HCT116 (cell line): ENCODE measurements at regions of chr5 and their contacts with region 1.

Region 1: GRCh38 chr5:82641331-82642003 is 363.3 kb upstream of the RPS23 start:
- DNase-seq: peak; percentile 73
- ATAC-seq: peak; percentile 95
- H3K4me3 ChIP-seq: no peak overlapping the region
- H3K27ac ChIP-seq: no peak overlapping the region
- H3K4me1 ChIP-seq: peaks cover 10 to 27% of the 10 kb centered on the region in 2 experiments; a peak in 3 of 4 replicates
- H3K27me3 ChIP-seq: no peaks in the 10 kb centered on the region
- CTCF ChIP-seq: peak; percentile 62 to 72 (median 72)
- POLR2A ChIP-seq: no peak
- RAD21 ChIP-seq: peak; percentile 88

Region 2: DNA sequence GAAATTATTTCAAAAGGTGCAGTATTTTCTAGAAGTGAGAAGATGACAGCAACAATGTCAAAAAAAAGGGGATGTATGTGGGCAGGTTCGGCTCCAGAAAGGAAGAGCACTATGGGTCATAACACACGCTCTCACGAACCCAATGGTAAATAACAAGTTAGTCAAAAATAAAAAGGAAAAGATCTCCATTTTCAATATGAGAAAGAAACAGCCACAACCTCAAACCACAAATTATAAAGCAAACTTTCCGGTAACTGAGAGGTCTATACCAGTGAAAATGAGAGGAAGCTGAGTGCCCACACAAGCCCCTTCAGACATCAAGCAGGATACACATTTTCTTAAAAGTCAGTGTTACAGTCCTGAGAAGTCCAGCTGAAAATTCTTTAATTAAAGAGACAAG is 35.2 kb after region 1 on chr5:
- CTCF ChIA-PET with region 1: no interaction called
- POLR2A ChIA-PET with region 1: no interaction called
- RAD21 ChIA-PET with region 1: no interaction called
- intact Hi-C with region 1: no loop called
- DNase-seq: no peak
- ATAC-seq: no peak
- H3K4me3 ChIP-seq: no peak overlapping the region
- H3K27ac ChIP-seq: no peak overlapping the region
- H3K4me1 ChIP-seq: no peaks in the 10 kb centered on the region
- H3K27me3 ChIP-seq: no peaks in the 10 kb centered on the region
- CTCF ChIP-seq: no peak
- POLR2A ChIP-seq: no peak
- RAD21 ChIP-seq: no peak

Region 3: DNA sequence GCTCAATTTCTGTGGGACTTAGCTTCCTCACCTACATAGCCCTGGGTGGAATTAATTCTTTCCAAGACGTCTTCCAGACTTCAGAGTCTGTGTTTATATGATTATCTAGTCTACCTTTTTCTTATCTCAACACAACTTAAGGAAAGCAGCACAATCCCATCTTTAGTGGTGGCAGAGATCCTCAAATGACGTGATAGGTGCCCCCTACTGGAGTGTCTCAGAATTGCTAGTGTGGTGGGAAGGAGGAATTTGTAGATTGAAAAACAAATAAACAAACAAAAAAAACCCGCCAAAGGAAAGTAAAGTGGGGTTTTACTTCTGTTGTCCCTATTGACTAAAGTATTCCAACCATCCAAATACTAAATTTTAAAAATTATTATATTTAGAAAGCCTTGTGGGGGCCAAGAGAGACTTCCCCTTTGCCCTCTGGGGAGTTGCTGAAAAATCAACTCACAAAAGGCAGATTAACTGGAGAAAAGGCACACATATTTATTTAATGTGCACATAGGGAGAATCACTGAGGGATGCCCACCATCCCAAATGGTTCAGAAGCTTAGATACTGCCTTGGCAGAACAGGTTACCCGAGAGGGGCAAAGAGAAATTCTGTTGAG is 152.4 kb after region 1 on chr5:
- CTCF ChIA-PET with region 1: interaction called, 4 read pairs
- POLR2A ChIA-PET with region 1: no interaction called
- RAD21 ChIA-PET with region 1: no interaction called
- intact Hi-C with region 1: loop called (anchors 2 kb)
- DNase-seq: peak; percentile 26
- ATAC-seq: peak; percentile 62
- H3K4me3 ChIP-seq: no peak overlapping the region
- H3K27ac ChIP-seq: no peak overlapping the region
- H3K4me1 ChIP-seq: no peaks in the 10 kb centered on the region
- H3K27me3 ChIP-seq: no peaks in the 10 kb centered on the region
- CTCF ChIP-seq: peak; percentile 49 to 76 (median 74); a peak in 5 of 6 replicates
- POLR2A ChIP-seq: no peak
- RAD21 ChIP-seq: peak; percentile 60

Region 4: GRCh38 chr5:82917584-82917983 is 276.1 kb after region 1 on chr5:
- CTCF ChIA-PET with region 1: no interaction called
- POLR2A ChIA-PET with region 1: no interaction called
- RAD21 ChIA-PET with region 1: no interaction called
- intact Hi-C with region 1: loop called (anchors 10 kb)
- DNase-seq: no peak
- ATAC-seq: no peak
- H3K4me3 ChIP-seq: no peak overlapping the region
- H3K27ac ChIP-seq: no peak overlapping the region
- H3K4me1 ChIP-seq: peaks cover 5 to 29% of the 10 kb centered on the region in 2 experiments; a peak in 3 of 4 replicates
- H3K27me3 ChIP-seq: no peaks in the 10 kb centered on the region
- CTCF ChIP-seq: no peak
- POLR2A ChIP-seq: no peak
- RAD21 ChIP-seq: no peak

Region 5: GRCh38 chr5:82975396-82975795 is 333.9 kb after region 1 on chr5:
- CTCF ChIA-PET with region 1: no interaction called
- POLR2A ChIA-PET with region 1: no interaction called
- RAD21 ChIA-PET with region 1: no interaction called
- intact Hi-C with region 1: loop called (anchors 5 kb)
- DNase-seq: no peak
- ATAC-seq: peak; percentile 20; the same call in 1 of the 2 replicates
- H3K4me3 ChIP-seq: peak overlapping the region; percentile 63 to 71
- H3K27ac ChIP-seq: peak overlapping the region; percentile 96
- H3K4me1 ChIP-seq: peaks cover 24 to 84% of the 10 kb centered on the region in 2 experiments
- H3K27me3 ChIP-seq: no peaks in the 10 kb centered on the region
- CTCF ChIP-seq: no peak
- POLR2A ChIP-seq: no peak
- RAD21 ChIP-seq: no peak

Region 6: GRCh38 chr5:83430130-83431010 is 788.9 kb after region 1 on chr5:
- CTCF ChIA-PET with region 1: no interaction called
- POLR2A ChIA-PET with region 1: no interaction called
- RAD21 ChIA-PET with region 1: no interaction called
- intact Hi-C with region 1: loop called (anchors 5 kb)
- DNase-seq: peak; percentile 75
- ATAC-seq: peak; percentile 98
- H3K4me3 ChIP-seq: no peak overlapping the region
- H3K27ac ChIP-seq: no peak overlapping the region
- H3K4me1 ChIP-seq: peaks cover 0 to 10% of the 10 kb centered on the region in 2 experiments; a peak in 2 of 4 replicates
- H3K27me3 ChIP-seq: no peaks in the 10 kb centered on the region
- CTCF ChIP-seq: peak; percentile 92 to 98 (median 96)
- POLR2A ChIP-seq: no peak
- RAD21 ChIP-seq: peak; percentile 91

Region 7: DNA sequence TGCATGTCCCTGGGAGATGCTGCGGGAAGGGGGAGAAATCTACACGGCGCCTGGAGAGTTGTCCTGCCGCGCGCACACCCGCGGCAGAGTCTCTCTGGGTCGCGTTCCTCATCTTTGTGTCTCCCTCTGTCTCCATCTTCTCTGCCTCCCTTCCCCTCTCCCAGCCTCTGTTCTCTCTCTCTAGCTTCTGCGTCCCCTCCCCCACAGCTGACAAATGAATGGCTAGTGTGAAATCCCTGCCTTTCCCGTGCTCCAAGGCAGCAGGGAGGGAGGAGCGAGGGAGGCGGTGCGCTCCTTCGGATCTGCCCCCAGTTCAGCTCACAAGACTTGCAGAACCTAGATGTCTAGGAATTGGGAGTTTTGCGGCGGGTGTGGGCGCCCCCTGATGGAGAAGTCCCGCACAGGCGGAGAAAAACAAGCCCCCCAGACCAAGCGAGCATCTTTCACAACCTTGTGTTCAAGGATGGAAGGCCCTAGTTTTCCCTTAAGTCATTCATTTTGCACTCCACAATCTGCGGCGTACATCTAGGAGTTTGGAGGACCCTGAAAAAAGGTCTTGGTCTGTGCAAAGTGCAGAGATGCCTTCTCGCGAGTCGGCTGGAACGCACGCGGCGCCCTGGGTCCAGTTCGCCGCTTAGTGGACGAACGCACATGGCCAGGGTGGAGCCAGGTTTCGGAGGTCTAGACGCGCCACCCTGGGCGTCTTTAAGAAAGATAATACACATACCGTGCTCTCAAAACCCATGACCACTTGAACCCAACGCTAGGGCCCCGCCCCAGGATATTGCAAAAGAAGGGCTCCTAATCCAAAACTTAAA is 832.1 kb after region 1 on chr5:
- CTCF ChIA-PET with region 1: interaction called, 3 read pairs
- POLR2A ChIA-PET with region 1: no interaction called
- RAD21 ChIA-PET with region 1: no interaction called
- intact Hi-C with region 1: loop called (anchors 1 kb)
- DNase-seq: peak; percentile 86
- ATAC-seq: peak; percentile 65
- H3K4me3 ChIP-seq: peak overlapping the region; percentile 55 to 62
- H3K27ac ChIP-seq: peak overlapping the region; percentile 63
- H3K4me1 ChIP-seq: peaks cover 13 to 40% of the 10 kb centered on the region in 2 experiments
- H3K27me3 ChIP-seq: no peaks in the 10 kb centered on the region
- CTCF ChIP-seq: peak; percentile 44 to 86 (median 70); a peak in 5 of 6 replicates
- POLR2A ChIP-seq: no peak
- RAD21 ChIP-seq: peak; percentile 81

Region 8: GRCh38 chr5:83564069-83564749 is 922.7 kb after region 1 on chr5:
- CTCF ChIA-PET with region 1: interaction called, 5 read pairs
- POLR2A ChIA-PET with region 1: no interaction called
- RAD21 ChIA-PET with region 1: no interaction called
- intact Hi-C with region 1: loop called (anchors 1 kb)
- DNase-seq: peak; percentile 35
- ATAC-seq: peak; percentile 67
- H3K4me3 ChIP-seq: no peak overlapping the region
- H3K27ac ChIP-seq: no peak overlapping the region
- H3K4me1 ChIP-seq: peaks cover 9 to 13% of the 10 kb centered on the region in 2 experiments; a peak in 2 of 4 replicates
- H3K27me3 ChIP-seq: no peaks in the 10 kb centered on the region
- CTCF ChIP-seq: peak; percentile 29 to 71 (median 65); a peak in 4 of 6 replicates
- POLR2A ChIP-seq: no peak
- RAD21 ChIP-seq: peak; percentile 83